Activated T-helper 2 cell treated with anti-CD3 and anti-CD28 coated beads, Interferon-gamma antibody, Interleukin-2, Interleukin-4, amounts not matched to agents 10 μg/mL and 5 μg/mL and 100 μg/mL, durations not matched to agents 14 hours and 24 hours and 36 hours (primary cell): ENCODE measurements at regions of chr4 and their contacts with region 1.

Region 1: DNA sequence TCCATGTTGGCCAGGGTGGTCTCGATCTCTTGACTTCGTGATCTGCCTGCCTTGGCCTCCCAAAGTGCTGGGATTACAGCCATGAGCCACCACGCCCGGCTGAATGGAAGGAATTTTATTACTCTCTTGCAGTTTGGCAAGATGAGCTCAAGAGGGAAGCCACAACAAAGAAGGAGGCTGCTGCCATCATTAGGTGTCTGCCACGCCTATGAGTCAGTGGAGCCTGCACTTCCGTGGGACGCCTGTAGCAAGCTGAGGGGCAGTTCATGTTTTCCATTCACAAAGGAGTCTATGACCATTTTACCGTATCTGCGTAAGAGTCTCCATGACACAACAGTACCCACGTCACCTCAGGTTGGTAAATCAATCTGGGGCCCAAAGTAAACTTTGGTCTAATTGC is 51.2 kb upstream of the CHRNA9 start:
- DNase-seq: peak; percentile 70
- H3K4me3 Mint-ChIP-seq: peak overlapping the region; percentile 45
- H3K27ac Mint-ChIP-seq: peak overlapping the region; percentile 96
- H3K4me1 Mint-ChIP-seq: peaks cover 47% of the 10 kb centered on the region
- H3K27me3 Mint-ChIP-seq: no peaks in the 10 kb centered on the region

Region 2: GRCh38 chr4:40255393-40256281 is 28.3 kb before region 1 on chr4:
- intact Hi-C with region 1: loop called (anchors 1 kb)
- DNase-seq: no peak
- H3K4me3 Mint-ChIP-seq: peak overlapping the region; percentile 15
- H3K27ac Mint-ChIP-seq: peak overlapping the region; percentile 85
- H3K4me1 Mint-ChIP-seq: peaks cover 52% of the 10 kb centered on the region
- H3K27me3 Mint-ChIP-seq: no peaks in the 10 kb centered on the region

Region 3: GRCh38 chr4:40301603-40302002 is 17.6 kb after region 1 on chr4:
- intact Hi-C with region 1: loop called (anchors 1 kb)
- DNase-seq: peak; percentile 70
- H3K4me3 Mint-ChIP-seq: peak overlapping the region; percentile 58
- H3K27ac Mint-ChIP-seq: peak overlapping the region; percentile 93
- H3K4me1 Mint-ChIP-seq: peaks cover 70% of the 10 kb centered on the region
- H3K27me3 Mint-ChIP-seq: no peaks in the 10 kb centered on the region